Mammary epithelial cell (primary cell): ENCODE measurements at regions of chr20 and their contacts with region 1.

Region 1: DNA sequence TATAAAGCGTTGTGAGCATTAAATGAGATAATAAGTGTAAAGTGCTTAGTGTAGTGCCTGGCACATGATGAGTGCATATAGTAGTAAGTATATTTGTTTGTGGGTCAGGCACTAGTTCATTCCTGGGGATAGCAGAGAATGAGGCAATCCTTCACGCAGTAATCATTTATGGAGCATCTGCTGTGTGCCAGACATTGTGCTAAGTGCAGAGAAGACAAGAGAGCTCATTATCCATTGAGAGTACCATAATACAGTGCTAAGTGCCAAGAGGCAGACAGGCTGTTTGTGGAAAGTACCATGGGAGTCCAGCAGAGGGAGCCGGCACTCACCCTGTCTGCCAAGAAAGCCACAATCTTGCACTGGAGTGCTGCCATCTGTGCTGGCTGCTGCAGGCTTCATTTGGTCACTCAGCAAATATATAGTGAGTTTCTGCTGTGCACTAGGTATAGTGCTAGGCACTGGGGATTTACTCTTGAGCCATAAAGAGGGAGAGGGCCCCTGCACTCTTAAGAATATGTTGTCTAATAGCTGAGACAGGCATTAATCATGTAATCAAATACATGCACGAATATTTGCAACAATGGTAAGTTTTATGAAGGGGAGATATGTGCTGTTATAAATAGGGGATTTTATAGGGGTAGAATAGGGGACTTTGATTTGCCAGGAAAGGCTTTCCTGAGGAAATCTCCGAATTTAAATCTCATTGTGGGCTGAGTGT is 12.9 kb upstream of the MROH8 start:
- DNase-seq: peak; percentile 67
- H3K4me3 ChIP-seq: no peak overlapping the region
- H3K27ac ChIP-seq: no peak overlapping the region
- H3K4me1 ChIP-seq: peaks cover 3% of the 10 kb centered on the region
- H3K27me3 ChIP-seq: no peaks in the 10 kb centered on the region
- CTCF ChIP-seq: peak; percentile 89 to 93

Region 2: DNA sequence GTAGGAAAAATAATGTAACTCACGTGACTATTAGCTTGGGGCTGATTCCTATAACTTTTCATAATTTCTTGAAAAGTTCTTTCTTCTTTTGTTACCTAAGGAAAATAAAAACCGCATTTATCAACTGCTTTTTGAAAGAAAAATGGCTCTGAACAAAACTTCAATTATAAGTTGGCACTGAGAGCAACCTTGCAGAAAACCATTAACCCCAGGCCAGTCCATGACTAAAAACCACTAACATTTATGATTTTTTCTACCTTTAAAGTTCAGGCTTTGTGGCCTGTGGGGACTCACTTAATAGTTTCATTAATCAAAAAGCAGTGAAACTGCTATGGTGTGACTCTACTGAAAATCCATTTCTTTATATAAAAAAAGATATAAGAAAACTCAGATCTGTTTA is 171.7 kb before region 1 on chr20:
- CTCF ChIA-PET with region 1: interaction called, 17 read pairs
- dilution Hi-C with region 1: no loop called
- in situ Hi-C with region 1: no loop called
- intact Hi-C with region 1: no loop called
- DNase-seq: no peak
- H3K4me3 ChIP-seq: no peak overlapping the region
- H3K27ac ChIP-seq: no peak overlapping the region
- H3K4me1 ChIP-seq: no peaks in the 10 kb centered on the region
- H3K27me3 ChIP-seq: no peaks in the 10 kb centered on the region
- CTCF ChIP-seq: no peak

Region 3: DNA sequence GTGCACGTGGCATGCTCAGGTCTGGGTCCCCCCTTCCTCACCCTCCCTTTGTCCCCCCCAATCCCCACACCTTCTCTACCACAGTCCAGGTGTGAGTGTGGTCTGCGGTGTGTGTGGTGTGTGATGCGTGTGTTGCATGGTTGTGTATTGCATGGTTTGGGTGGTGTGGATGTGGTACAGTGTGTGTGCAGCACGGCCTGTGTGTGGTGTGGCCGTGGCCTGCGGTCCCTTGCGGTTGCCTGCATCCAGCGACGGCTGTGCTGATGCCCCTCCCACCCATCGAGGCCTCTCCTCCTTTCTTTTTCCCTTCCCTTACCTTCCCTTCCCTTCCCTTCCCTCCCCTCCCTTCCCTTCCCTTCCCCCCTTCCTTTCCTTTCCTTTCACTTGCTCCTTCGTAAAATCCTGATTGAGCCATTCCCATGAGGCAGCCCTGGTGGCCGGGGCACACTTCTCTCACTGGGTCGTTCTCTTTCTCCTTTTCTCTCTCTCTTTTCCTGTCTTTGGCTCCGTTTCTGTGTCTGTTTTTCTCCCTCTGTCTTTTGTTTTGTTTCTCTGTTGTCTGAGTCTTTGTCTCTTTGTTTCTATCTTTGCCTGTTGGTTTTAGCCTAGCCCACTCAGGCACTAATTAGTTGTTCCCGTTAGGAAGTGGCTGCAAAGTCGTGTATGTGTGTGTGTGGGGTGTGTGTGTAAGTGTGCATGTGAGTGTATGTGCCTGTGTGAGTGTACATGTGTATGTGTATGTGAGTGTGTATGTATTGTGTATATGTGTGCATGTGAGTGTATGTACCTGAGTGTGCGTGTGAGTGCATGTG is 219.3 kb after region 1 on chr20:
- CTCF ChIA-PET with region 1: no interaction called
- dilution Hi-C with region 1: no loop called
- in situ Hi-C with region 1: no loop called
- intact Hi-C with region 1: no loop called
- DNase-seq: no peak
- H3K4me3 ChIP-seq: no peak overlapping the region
- H3K27ac ChIP-seq: no peak overlapping the region
- H3K4me1 ChIP-seq: peaks cover 24% of the 10 kb centered on the region
- H3K27me3 ChIP-seq: no peaks in the 10 kb centered on the region
- CTCF ChIP-seq: no peak